ENCODE measurements at regions of chr1 and their contacts with region 1.

Region 1: GRCh38 chr1:37602750-37603694 is 7.3 kb upstream of the GNL2 start:
- DNase-seq: peak; percentile 53
- ATAC-seq: peak; percentile 76
- H3K4me3 Mint-ChIP-seq: no peak overlapping the region
- H3K27ac Mint-ChIP-seq: no peak overlapping the region
- H3K4me1 Mint-ChIP-seq: no peaks in the 10 kb centered on the region
- H3K27me3 Mint-ChIP-seq: peaks cover 21% of the 10 kb centered on the region

Region 2: GRCh38 chr1:37458528-37458927 is 144.5 kb before region 1 on chr1:
- CTCF ChIA-PET with region 1: interaction called, 11 read pairs
- POLR2A ChIA-PET with region 1: no interaction called
- DNase-seq: no peak
- ATAC-seq: no peak
- H3K4me3 Mint-ChIP-seq: no peak overlapping the region
- H3K27ac Mint-ChIP-seq: no peak overlapping the region
- H3K4me1 Mint-ChIP-seq: peaks cover 12% of the 10 kb centered on the region
- H3K27me3 Mint-ChIP-seq: no peaks in the 10 kb centered on the region

Region 3: DNA sequence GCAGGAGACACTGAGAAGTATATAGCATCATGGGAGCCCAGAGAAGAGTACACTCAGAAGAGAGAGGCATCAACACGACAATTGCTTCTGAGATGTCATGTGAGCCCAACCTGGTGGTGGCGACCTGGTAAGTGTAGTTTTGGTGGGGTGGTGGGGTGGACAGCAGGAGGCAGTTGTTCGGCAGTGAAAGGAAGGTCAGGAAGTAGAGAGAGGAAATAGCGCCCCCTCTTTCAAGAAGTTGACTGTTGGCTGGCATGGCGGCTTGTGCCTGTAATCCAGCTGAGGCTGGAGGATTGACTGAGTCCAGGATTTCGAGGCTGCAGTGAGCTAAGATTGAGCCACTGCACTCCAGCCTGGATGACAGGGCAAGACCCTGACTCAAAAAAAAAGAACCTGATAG is 19.1 kb after region 1 on chr1:
- CTCF ChIA-PET with region 1: interaction called, 10 read pairs
- POLR2A ChIA-PET with region 1: no interaction called
- DNase-seq: no peak
- ATAC-seq: no peak
- H3K4me3 Mint-ChIP-seq: no peak overlapping the region
- H3K27ac Mint-ChIP-seq: no peak overlapping the region
- H3K4me1 Mint-ChIP-seq: no peaks in the 10 kb centered on the region
- H3K27me3 Mint-ChIP-seq: peaks cover 34% of the 10 kb centered on the region

Region 4: GRCh38 chr1:37673920-37674319 is 70.9 kb after region 1 on chr1:
- CTCF ChIA-PET with region 1: interaction called, 196 read pairs
- POLR2A ChIA-PET with region 1: no interaction called
- DNase-seq: peak; percentile 88
- ATAC-seq: peak; percentile 93
- H3K4me3 Mint-ChIP-seq: peak overlapping the region; percentile 9
- H3K27ac Mint-ChIP-seq: peak overlapping the region; percentile 37
- H3K4me1 Mint-ChIP-seq: peaks cover 14% of the 10 kb centered on the region
- H3K27me3 Mint-ChIP-seq: peaks cover 55% of the 10 kb centered on the region

Region 5: DNA sequence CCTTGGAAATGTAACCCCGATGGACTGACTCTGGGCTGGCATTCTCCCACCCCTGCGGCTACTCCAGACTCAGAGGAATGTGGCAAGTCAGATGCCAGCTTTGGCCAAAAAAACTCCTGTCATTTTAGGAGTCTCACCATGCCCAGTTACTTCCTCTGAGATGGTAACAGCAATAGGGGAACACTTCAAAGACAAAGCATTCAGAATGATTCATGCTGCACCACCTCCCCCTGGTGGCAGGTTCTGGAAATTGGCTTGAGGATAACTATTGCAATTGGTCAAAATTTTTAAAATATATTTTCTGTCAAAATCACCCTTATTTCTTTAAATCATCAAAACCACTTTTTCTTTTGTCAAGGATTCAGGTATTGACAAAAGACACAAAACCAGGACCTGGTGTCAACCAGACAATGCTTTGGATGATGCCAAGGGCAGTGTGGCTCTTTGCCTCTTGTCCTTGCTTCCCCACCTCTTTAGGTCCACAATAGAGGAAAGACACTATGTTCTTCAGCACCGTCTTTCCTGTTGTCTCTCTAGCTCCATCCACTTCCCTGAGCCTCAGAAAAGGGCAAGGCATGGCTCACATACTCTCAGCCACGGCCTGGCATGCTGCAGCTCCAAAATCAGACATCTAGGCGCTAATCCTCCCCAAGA is 79.4 kb after region 1 on chr1:
- CTCF ChIA-PET with region 1: interaction called, 196 read pairs
- POLR2A ChIA-PET with region 1: no interaction called
- DNase-seq: peak; percentile 86
- ATAC-seq: peak; percentile 61
- H3K4me3 Mint-ChIP-seq: no peak overlapping the region
- H3K27ac Mint-ChIP-seq: no peak overlapping the region
- H3K4me1 Mint-ChIP-seq: peaks cover 3% of the 10 kb centered on the region
- H3K27me3 Mint-ChIP-seq: peaks cover 18% of the 10 kb centered on the region

Region 6: GRCh38 chr1:37692078-37692833 is 89.2 kb after region 1 on chr1 and contains the start of gene CDCA8:
- CTCF ChIA-PET with region 1: interaction called, 35 read pairs
- POLR2A ChIA-PET with region 1: interaction called, 3 read pairs
- DNase-seq: peak; percentile 99
- ATAC-seq: peak; percentile 88
- H3K4me3 Mint-ChIP-seq: peak within 1 kb of the TSS; percentile 99
- H3K27ac Mint-ChIP-seq: peak within 1 kb of the TSS; percentile 97
- H3K4me1 Mint-ChIP-seq: peaks cover 54% of the 10 kb centered on the region
- H3K27me3 Mint-ChIP-seq: no peaks in the 10 kb centered on the region
- total RNA-seq, gene CDCA8: 97.3 to 102 TPM

Region 7: GRCh38 chr1:38064232-38064903 is 461.3 kb after region 1 on chr1:
- CTCF ChIA-PET with region 1: no interaction called
- POLR2A ChIA-PET with region 1: no interaction called
- DNase-seq: no peak
- ATAC-seq: no peak
- H3K4me3 Mint-ChIP-seq: no peak overlapping the region
- H3K27ac Mint-ChIP-seq: no peak overlapping the region
- H3K4me1 Mint-ChIP-seq: no peaks in the 10 kb centered on the region
- H3K27me3 Mint-ChIP-seq: peaks cover 14% of the 10 kb centered on the region